Activated CD4-positive, alpha-beta memory T cell treated with anti-CD3 and anti-CD28 coated beads for 36 hours (primary cell): ENCODE measurements at regions of chr6 and their contacts with region 1.

Region 1: GRCh38 chr6:106097411-106098231 is 11.5 kb downstream of the PRDM1 start:
- DNase-seq: peak; percentile 69
- H3K4me3 Mint-ChIP-seq: peak overlapping the region; percentile 91
- H3K27ac Mint-ChIP-seq: peak overlapping the region; percentile 96
- H3K4me1 Mint-ChIP-seq: peaks cover 77% of the 10 kb centered on the region
- H3K27me3 Mint-ChIP-seq: peaks cover 2% of the 10 kb centered on the region

Region 2: GRCh38 chr6:105780146-105780860 is 317.3 kb before region 1 on chr6:
- CTCF ChIA-PET with region 1: no interaction called
- POLR2A ChIA-PET with region 1: no interaction called
- intact Hi-C with region 1: loop called (anchors 5 kb)
- DNase-seq: no peak
- H3K4me3 Mint-ChIP-seq: no peak overlapping the region
- H3K27ac Mint-ChIP-seq: no peak overlapping the region
- H3K4me1 Mint-ChIP-seq: peaks cover 19% of the 10 kb centered on the region
- H3K27me3 Mint-ChIP-seq: no peaks in the 10 kb centered on the region

Region 3: DNA sequence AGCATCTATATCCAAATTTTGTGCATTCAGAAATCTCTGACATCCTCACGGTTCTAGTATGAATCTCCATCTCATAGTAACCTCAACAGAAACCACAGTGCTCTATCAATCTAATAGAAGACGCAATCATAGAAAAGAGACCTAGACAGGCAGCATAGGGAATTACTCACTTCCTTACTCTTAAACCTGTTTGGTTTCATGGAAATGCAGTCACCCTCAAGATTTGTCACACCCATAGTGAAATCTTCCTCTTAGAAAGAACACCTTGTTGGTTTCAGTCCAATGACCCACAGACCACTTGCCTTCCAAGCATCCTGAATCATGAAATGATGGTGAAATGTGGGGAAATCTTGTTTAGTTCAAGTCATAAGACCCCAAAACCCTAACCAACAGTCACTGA is 177.6 kb before region 1 on chr6:
- CTCF ChIA-PET with region 1: no interaction called
- POLR2A ChIA-PET with region 1: no interaction called
- intact Hi-C with region 1: loop called (anchors 1 kb)
- DNase-seq: peak; percentile 50
- H3K4me3 Mint-ChIP-seq: no peak overlapping the region
- H3K27ac Mint-ChIP-seq: peak overlapping the region; percentile 74
- H3K4me1 Mint-ChIP-seq: peaks cover 13% of the 10 kb centered on the region
- H3K27me3 Mint-ChIP-seq: peaks cover 7% of the 10 kb centered on the region

Region 4: DNA sequence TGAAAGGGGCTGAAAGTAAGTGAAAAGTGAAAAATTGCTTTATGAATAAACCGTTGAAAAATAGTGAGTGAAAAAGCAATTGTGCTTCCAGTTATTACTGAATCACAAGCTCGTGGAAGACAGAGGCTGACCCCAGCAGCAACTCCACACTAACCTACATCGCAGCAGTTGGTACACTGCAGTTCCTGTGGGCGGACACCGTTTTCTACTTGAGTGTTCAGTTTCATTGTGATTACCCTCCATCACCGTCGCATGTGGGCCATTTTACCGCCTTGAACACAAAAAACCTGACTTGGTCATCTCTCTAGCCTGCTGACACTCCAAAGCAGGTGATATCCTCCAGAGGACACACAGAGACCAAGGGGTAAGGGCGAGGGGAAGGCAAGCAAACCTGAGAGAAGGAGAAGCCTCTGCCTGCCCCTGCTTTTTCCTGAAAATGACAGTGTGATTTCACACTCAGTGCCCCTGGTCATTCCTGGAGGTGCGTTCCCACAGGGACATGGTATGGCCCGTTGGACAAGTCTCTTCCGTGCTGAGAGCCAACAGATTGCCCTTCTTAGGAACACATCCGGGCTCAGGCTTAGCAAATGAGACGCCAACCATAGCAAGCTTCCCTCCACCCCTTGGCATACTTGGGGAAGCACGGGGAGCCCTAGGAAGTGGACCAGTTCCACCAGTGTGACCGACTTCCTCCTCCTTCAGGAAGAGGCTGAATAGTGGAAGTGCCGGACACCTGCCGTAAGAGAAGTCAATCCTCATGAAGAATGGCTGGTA is 17.1 kb after region 1 on chr6:
- CTCF ChIA-PET with region 1: interaction called, 9 read pairs
- POLR2A ChIA-PET with region 1: interaction called, 25 read pairs
- intact Hi-C with region 1: loop called (anchors 1 kb)
- DNase-seq: peak; percentile 92
- H3K4me3 Mint-ChIP-seq: peak overlapping the region; percentile 25
- H3K27ac Mint-ChIP-seq: peak overlapping the region; percentile 75
- H3K4me1 Mint-ChIP-seq: peaks cover 92% of the 10 kb centered on the region
- H3K27me3 Mint-ChIP-seq: peaks cover 8% of the 10 kb centered on the region

Region 5: GRCh38 chr6:106187424-106187982 is 89.9 kb after region 1 on chr6:
- CTCF ChIA-PET with region 1: interaction called, 10 read pairs
- POLR2A ChIA-PET with region 1: interaction called, 68 read pairs
- intact Hi-C with region 1: loop called (anchors 1 kb)
- DNase-seq: no peak
- H3K4me3 Mint-ChIP-seq: no peak overlapping the region
- H3K27ac Mint-ChIP-seq: peak overlapping the region; percentile 53
- H3K4me1 Mint-ChIP-seq: peaks cover 70% of the 10 kb centered on the region
- H3K27me3 Mint-ChIP-seq: no peaks in the 10 kb centered on the region

Region 6: DNA sequence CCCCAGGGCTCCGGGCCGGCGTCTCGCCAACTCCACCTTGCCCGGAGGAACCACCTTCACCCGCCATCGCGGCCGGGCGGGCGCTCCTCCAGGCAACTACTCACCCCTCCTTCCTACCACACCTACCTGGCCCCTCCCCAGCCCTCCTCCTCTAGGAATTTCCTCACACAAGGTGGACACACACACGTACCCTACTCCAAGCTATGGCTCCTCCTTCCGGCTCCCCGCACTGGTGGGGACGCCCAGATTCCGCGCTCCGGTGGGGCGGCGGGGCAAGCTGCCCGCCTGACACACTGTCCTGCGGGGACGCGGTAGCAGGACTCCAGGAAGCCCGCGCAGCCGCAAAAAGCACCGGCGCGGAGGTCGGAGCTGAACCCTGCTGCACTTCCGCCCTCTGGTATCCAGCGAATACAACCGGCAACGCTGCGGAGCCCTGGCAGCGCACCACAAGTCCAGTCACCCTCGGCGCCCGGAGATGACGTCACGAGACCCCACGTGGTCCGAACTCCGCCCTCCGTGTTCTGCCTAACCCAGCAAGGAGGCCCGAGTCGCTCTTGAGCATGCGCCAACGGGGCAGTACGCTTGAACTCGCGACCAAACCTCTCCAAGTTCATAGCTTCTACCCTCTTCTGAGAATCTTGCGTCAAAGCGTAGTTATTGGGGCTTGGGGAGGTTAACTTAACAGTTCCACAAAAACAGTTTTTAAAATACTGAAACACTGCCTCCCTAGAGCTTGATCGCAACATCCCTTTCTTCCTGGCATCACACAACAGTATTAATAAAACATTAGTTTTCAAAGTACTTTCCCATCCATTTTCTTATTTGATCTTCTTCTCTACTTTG is 227.9 kb after region 1 on chr6 and contains the start of gene ATG5:
- CTCF ChIA-PET with region 1: interaction called, 3 read pairs
- POLR2A ChIA-PET with region 1: no interaction called
- intact Hi-C with region 1: loop called (anchors 1 kb)
- DNase-seq: peak; percentile 100
- H3K4me3 Mint-ChIP-seq: peak within 1 kb of the TSS; percentile 96
- H3K27ac Mint-ChIP-seq: peak within 1 kb of the TSS; percentile 94
- H3K4me1 Mint-ChIP-seq: peaks cover 38% of the 10 kb centered on the region
- H3K27me3 Mint-ChIP-seq: peaks cover 3% of the 10 kb centered on the region
- total RNA-seq, gene ATG5: 29.2 TPM

Region 7: DNA sequence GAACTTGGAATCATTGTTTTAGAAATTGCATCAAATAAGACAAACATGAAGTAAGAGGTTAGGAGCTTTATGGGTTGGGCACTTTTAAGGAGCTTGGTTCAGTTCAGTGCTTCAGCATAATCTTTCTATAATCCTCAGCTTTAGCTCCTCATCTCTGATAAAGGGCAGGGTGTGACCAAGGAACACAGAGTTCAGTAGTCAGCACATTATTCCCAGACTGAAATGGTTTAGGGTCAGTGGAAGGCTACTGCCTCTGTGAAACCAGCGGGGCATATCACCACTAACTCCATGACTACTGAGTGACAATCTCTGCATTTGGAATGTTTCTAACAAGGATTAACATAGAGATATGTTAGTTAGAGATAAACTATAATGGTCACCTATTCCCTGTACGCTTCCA is 299.8 kb after region 1 on chr6:
- CTCF ChIA-PET with region 1: no interaction called
- POLR2A ChIA-PET with region 1: no interaction called
- intact Hi-C with region 1: no loop called
- DNase-seq: no peak
- H3K4me3 Mint-ChIP-seq: no peak overlapping the region
- H3K27ac Mint-ChIP-seq: no peak overlapping the region
- H3K4me1 Mint-ChIP-seq: no peaks in the 10 kb centered on the region
- H3K27me3 Mint-ChIP-seq: peaks cover 10% of the 10 kb centered on the region